Activated CD8-positive, alpha-beta T cell treated with anti-CD3 and anti-CD28 coated beads for 36 hours (primary cell): ENCODE measurements at regions of chr7 and their contacts with region 1.

Region 1: DNA sequence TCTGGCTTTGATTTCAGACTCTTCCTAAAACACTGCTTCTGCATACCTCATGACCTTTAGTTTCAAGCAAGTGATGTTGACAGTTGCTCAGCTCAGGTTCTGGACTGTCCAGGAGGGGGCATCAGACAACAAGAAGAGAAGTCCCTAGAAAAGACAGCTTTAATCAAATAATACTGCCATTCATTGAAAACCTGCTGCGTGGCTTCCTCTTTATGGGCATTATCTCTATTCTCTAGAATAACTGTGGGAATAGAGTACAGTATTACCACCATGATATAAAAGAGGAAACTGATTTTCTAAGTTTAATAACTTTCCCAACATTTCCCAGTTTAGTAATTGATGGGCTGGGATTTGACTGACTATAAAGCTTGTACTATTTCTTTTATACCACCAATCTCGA is 170.4 kb downstream of the SNX13 start:
- DNase-seq: peak; percentile 80
- ATAC-seq: peak; percentile 64
- H3K4me3 Mint-ChIP-seq: no peak overlapping the region
- H3K27ac Mint-ChIP-seq: no peak overlapping the region
- H3K4me1 Mint-ChIP-seq: peaks cover 7% of the 10 kb centered on the region
- H3K27me3 Mint-ChIP-seq: no peaks in the 10 kb centered on the region
- CTCF ChIP-seq: peak; percentile 70

Region 2: GRCh38 chr7:17392846-17393245 is 377.1 kb before region 1 on chr7:
- CTCF ChIA-PET with region 1: no interaction called
- POLR2A ChIA-PET with region 1: no interaction called
- intact Hi-C with region 1: no loop called
- DNase-seq: no peak
- ATAC-seq: no peak
- H3K4me3 Mint-ChIP-seq: no peak overlapping the region
- H3K27ac Mint-ChIP-seq: no peak overlapping the region
- H3K4me1 Mint-ChIP-seq: no peaks in the 10 kb centered on the region
- H3K27me3 Mint-ChIP-seq: peaks cover 13% of the 10 kb centered on the region
- CTCF ChIP-seq: no peak

Region 3: DNA sequence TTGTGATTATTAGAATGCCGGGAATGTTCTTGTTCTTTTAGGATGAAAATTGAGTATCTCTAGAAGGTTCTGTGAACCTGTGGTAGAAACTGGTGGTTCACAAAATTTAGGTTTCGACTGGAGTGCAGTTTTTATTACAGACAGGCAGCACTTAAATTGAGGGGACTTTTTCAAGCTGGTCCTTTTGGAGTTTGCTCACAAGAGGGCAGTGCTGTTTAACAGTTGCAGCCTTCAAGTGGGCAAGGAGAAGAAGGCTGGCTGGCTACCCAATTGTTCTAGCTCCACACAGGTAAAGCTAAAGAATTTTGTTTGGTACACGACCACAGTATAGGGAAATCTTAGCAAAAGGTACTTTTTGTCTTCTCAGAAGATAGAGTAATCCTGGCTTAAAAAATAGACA is 63.2 kb before region 1 on chr7:
- CTCF ChIA-PET with region 1: interaction called, 12 read pairs
- POLR2A ChIA-PET with region 1: no interaction called
- intact Hi-C with region 1: no loop called
- DNase-seq: peak; percentile 52
- ATAC-seq: no peak
- H3K4me3 Mint-ChIP-seq: no peak overlapping the region
- H3K27ac Mint-ChIP-seq: no peak overlapping the region
- H3K4me1 Mint-ChIP-seq: no peaks in the 10 kb centered on the region
- H3K27me3 Mint-ChIP-seq: no peaks in the 10 kb centered on the region
- CTCF ChIP-seq: peak; percentile 47

Region 4: DNA sequence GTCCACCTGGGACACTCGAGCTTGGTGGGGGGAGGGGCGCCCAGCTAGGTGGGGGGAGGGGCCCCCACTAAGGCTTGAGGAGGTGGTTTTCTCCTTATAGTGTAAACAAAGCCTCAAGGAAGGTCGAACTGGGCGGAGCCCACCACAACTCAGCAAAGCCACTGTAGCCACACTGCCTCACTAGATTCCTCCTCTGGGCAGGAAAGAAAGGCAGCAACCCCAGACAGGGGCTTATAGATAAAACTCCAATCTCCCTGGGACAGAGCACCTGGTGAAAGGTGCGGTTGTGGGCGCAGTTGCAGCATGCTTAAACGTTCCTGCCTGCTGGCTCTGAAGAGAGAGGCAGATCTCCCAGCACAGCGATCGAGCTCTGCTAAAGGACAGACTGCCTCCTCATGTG is 37.3 kb after region 1 on chr7:
- CTCF ChIA-PET with region 1: no interaction called
- POLR2A ChIA-PET with region 1: no interaction called
- intact Hi-C with region 1: no loop called
- DNase-seq: no peak
- ATAC-seq: no peak
- H3K4me3 Mint-ChIP-seq: no peak overlapping the region
- H3K27ac Mint-ChIP-seq: no peak overlapping the region
- H3K4me1 Mint-ChIP-seq: peaks cover 8% of the 10 kb centered on the region
- H3K27me3 Mint-ChIP-seq: no peaks in the 10 kb centered on the region
- CTCF ChIP-seq: no peak

Region 5: GRCh38 chr7:17940302-17940883 is 170.5 kb after region 1 on chr7 and contains the start of gene SNX13:
- CTCF ChIA-PET with region 1: interaction called, 7 read pairs
- POLR2A ChIA-PET with region 1: no interaction called
- intact Hi-C with region 1: loop called (anchors 10 kb)
- DNase-seq: peak; percentile 93
- ATAC-seq: peak; percentile 94
- H3K4me3 Mint-ChIP-seq: peak within 1 kb of the TSS; percentile 94
- H3K27ac Mint-ChIP-seq: peak within 1 kb of the TSS; percentile 93
- H3K4me1 Mint-ChIP-seq: peaks cover 36% of the 10 kb centered on the region
- H3K27me3 Mint-ChIP-seq: no peaks in the 10 kb centered on the region
- CTCF ChIP-seq: no peak
- total RNA-seq, gene SNX13: 20.7 to 24.1 TPM

Region 6: GRCh38 chr7:18064242-18064838 is 294.4 kb after region 1 on chr7:
- CTCF ChIA-PET with region 1: interaction called, 10 read pairs
- POLR2A ChIA-PET with region 1: no interaction called
- intact Hi-C with region 1: no loop called
- DNase-seq: peak; percentile 43
- ATAC-seq: no peak
- H3K4me3 Mint-ChIP-seq: no peak overlapping the region
- H3K27ac Mint-ChIP-seq: no peak overlapping the region
- H3K4me1 Mint-ChIP-seq: no peaks in the 10 kb centered on the region
- H3K27me3 Mint-ChIP-seq: peaks cover 4% of the 10 kb centered on the region
- CTCF ChIP-seq: peak; percentile 19

Region 7: DNA sequence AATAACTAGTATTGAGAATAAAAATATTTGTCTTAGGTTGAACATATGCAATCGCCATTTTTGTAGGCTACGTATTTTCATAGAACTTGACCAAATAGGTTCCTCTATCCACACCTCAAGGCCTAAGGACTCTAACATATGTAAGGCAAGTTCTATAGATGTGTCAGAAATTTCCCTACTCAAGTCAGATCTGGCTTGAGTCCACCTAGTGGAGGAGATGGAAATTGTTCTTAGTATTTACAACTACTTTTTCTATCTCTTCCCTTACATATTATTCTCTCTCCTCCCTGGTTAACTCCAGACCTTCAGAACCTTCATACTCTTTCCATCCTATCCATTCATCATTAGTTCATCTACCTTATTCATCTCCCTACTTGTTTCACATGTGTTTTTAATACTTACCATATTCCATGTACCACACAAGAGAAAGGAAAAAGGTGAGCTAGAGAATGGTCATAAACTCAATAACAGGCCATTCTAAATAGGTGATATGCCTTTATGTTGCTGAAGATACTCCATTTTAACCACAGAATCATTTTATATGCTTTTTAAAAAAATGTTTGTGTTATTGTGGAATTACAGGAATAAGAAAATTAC is 551.2 kb after region 1 on chr7:
- CTCF ChIA-PET with region 1: interaction called, 12 read pairs
- POLR2A ChIA-PET with region 1: no interaction called
- intact Hi-C with region 1: loop called (anchors 10 kb)
- DNase-seq: no peak
- ATAC-seq: peak; percentile 58
- H3K4me3 Mint-ChIP-seq: no peak overlapping the region
- H3K27ac Mint-ChIP-seq: no peak overlapping the region
- H3K4me1 Mint-ChIP-seq: no peaks in the 10 kb centered on the region
- H3K27me3 Mint-ChIP-seq: no peaks in the 10 kb centered on the region
- CTCF ChIP-seq: peak; percentile 64